A673 (cell line): ENCODE measurements at regions of chr19 and their contacts with region 1.

Region 1: DNA sequence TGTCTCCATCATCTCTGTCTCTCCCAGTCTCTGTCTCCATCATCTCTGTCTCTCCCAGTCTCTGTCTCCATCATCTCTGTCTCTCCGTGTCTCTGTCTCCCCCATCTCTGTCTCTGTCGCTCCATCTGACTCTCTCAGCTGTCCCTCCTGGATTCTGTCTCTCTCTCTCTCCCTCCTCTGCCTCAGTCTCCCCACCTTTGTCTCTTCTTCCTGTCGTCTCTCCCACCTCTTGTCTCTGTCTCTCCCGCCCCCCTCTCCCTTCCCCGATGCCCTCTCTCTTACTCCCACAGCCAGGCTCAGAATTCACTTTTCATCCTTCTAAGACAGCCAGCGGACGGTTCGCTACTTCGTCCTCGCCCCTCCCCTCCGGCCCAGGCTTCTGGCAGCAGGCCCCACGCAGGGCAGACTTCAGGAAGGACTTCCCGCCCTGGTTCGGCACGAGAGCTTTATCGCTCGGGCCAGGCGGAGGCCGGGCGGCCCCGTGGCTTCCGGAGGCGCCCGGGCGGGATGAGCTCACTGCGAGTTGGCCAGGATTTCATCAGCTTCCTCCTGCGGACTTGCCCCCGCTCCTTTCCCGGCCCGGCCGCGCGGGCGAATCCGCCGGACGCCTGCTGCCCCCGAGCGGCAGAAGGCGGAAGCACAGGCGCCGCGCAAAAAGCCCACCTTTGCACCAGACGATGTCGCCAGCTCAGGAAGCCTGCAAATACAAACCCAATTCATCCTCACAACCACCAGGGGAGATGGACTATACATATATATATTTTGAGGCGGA is 12.4 kb upstream of the CCDC9 start:
- DNase-seq: peak; percentile 97
- H3K4me3 ChIP-seq: peak overlapping the region; percentile 50
- H3K27ac ChIP-seq: peak overlapping the region; percentile 91
- H3K4me1 ChIP-seq: peaks cover 15% of the 10 kb centered on the region
- H3K27me3 ChIP-seq: peaks cover 13% of the 10 kb centered on the region
- CTCF ChIP-seq: peak; percentile 97

Region 2: DNA sequence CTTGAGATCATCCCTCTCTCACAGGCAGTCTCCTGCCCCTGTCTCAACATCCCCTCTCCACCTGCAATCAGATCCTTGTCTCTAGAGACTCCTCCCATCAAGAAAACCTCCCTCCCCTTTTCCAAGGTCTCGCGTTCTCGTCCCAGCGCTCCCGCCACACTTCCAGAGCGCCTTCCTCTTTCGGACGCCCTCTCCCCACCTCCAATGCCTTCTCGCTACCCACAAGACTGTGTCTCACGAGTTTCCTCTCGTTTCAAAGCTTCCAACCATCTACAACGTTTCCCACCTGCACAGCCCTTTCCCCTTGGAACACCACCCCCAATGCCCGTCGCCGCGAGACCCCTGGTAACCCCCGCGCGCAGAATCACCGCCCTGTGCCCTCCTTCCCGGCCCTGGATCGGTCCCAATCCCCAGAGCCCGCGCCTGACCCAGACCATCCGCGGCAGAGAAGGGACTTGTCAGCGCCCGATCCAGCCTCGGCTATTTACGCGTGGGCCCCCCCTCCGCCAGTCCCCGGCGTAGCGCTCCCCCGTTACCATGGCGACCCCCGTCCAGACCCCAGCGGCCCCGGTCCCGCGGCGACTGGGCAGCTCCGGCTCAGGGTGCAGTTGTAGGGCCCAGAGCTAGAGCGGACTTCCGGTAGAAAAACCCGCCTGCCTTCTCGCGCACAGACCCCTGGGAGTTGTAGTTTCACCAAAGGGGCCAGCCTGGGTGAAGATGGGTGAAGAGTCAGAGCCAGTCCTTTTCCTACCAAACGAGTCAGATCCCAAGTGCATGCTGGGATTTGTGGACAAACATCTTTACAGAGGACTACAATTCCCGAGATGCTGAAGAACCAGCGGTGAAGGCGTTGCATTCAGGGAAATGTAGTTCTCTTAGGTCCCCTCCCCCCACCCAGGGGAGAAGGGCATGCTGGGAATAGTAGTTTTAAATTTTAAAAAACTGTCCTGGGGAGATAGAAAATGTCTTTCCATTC is 393.4 kb before region 1 on chr19 and contains the start of gene AP2S1:
- CTCF ChIA-PET with region 1: no interaction called
- POLR2A ChIA-PET with region 1: no interaction called
- intact Hi-C with region 1: loop called (anchors 10 kb)
- DNase-seq: peak; percentile 99
- H3K4me3 ChIP-seq: peak within 1 kb of the TSS; percentile 60
- H3K27ac ChIP-seq: peak within 1 kb of the TSS; percentile 81
- H3K4me1 ChIP-seq: peaks cover 10% of the 10 kb centered on the region
- H3K27me3 ChIP-seq: no peaks in the 10 kb centered on the region
- CTCF ChIP-seq: no peak
- total RNA-seq, gene AP2S1: 226 and 241 TPM in 2 replicates

Region 3: GRCh38 chr19:47028195-47028601 is 215.8 kb before region 1 on chr19:
- CTCF ChIA-PET with region 1: interaction called, 7 read pairs
- POLR2A ChIA-PET with region 1: interaction called, 7 read pairs
- intact Hi-C with region 1: loop called (anchors 5 kb)
- DNase-seq: peak; percentile 46
- H3K4me3 ChIP-seq: peak overlapping the region; percentile 8
- H3K27ac ChIP-seq: no peak overlapping the region
- H3K4me1 ChIP-seq: peaks cover 15% of the 10 kb centered on the region
- H3K27me3 ChIP-seq: peaks cover 4% of the 10 kb centered on the region
- CTCF ChIP-seq: no peak

Region 4: GRCh38 chr19:47157431-47158321 is 86.3 kb before region 1 on chr19:
- CTCF ChIA-PET with region 1: no interaction called
- POLR2A ChIA-PET with region 1: no interaction called
- intact Hi-C with region 1: loop called (anchors 10 kb)
- DNase-seq: no peak
- H3K4me3 ChIP-seq: no peak overlapping the region
- H3K27ac ChIP-seq: peak overlapping the region; percentile 20
- H3K4me1 ChIP-seq: peaks cover 6% of the 10 kb centered on the region
- H3K27me3 ChIP-seq: no peaks in the 10 kb centered on the region
- CTCF ChIP-seq: no peak

Region 5: DNA sequence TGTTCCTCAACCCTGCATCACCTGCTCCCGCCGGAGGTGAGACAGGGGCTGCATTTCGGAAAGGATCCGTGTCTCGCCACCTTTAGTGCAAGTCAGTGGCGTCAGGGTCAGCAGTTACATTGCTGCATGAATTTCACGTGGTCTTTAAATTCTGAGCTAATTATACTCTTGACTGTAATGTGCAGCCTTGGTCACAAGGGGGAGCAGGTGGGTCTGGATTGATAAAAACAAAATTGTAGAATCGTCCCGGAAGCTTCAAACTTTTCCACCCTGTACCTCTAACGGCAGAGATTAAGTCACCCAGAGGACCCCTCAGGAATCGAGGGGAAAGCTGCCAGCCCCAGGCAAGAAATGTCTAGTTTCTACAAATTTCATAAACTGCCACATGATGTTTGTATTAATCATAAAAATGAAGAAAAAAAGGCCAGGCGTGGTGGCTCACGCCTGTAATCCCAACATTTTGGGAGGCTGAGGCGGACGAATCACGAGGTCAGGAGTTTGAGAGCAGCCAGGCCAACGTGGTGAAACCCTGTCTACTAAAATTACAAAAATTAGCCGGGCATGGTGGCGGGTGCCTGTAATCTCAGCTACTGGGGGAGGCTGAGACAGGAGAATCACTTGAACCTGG is 33.2 kb before region 1 on chr19:
- CTCF ChIA-PET with region 1: interaction called, 80 read pairs
- POLR2A ChIA-PET with region 1: interaction called, 8 read pairs
- intact Hi-C with region 1: loop called (anchors 1 kb)
- DNase-seq: peak; percentile 88
- H3K4me3 ChIP-seq: no peak overlapping the region
- H3K27ac ChIP-seq: peak overlapping the region; percentile 65
- H3K4me1 ChIP-seq: no peaks in the 10 kb centered on the region
- H3K27me3 ChIP-seq: no peaks in the 10 kb centered on the region
- CTCF ChIP-seq: peak; percentile 89

Region 6: DNA sequence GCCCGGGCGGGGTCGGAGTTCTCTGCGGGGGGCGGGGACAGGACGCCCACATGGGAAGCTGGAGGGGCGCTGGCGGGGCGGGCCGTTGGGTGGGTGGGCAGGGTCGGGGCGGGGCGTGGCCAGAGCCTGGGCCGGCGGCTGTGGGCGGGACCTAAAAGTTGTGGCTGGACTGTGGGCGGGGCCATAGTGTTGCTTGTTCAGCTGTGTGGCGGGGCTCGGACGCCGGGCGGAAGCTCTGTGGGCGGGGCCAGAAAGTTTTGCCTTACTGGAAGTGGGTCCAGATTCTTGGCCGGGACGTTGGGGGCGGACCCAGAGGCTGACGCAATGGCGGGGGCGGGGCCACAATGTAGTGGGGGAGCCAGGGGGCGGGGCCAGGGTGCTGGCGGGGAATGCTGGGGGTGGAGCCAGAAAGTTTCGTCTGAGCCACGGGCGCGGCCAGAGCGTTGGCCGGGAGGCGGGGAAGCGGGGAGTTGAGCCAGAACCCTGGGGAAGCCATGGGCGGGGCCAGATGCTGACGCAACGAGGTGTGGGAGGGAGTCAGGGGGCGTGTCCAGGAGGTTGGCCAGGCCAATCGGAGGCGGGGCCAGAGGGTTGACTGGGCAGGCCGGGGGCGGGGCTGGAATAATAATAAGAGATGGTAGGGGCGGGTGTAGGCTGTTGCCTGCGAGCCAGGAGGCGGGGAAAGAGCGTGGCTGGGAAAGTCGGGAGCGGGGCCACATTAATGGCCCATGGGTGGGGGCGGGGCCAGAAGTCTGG is 12.9 kb after region 1 on chr19:
- CTCF ChIA-PET with region 1: interaction called, 18 read pairs
- POLR2A ChIA-PET with region 1: interaction called, 9 read pairs
- intact Hi-C with region 1: no loop called
- DNase-seq: peak; percentile 99
- H3K4me3 ChIP-seq: peak overlapping the region; percentile 52
- H3K27ac ChIP-seq: peak overlapping the region; percentile 88
- H3K4me1 ChIP-seq: peaks cover 7% of the 10 kb centered on the region
- H3K27me3 ChIP-seq: no peaks in the 10 kb centered on the region
- CTCF ChIP-seq: no peak

Region 7: GRCh38 chr19:47305309-47305751 is 61.4 kb after region 1 on chr19:
- CTCF ChIA-PET with region 1: no interaction called
- POLR2A ChIA-PET with region 1: no interaction called
- intact Hi-C with region 1: no loop called
- DNase-seq: peak; percentile 80
- H3K4me3 ChIP-seq: no peak overlapping the region
- H3K27ac ChIP-seq: no peak overlapping the region
- H3K4me1 ChIP-seq: no peaks in the 10 kb centered on the region
- H3K27me3 ChIP-seq: no peaks in the 10 kb centered on the region
- CTCF ChIP-seq: peak; percentile 97